Ovary (tissue), 10 donors: ENCODE measurements at regions of chr9 and their contacts with region 1.

Region 1: DNA sequence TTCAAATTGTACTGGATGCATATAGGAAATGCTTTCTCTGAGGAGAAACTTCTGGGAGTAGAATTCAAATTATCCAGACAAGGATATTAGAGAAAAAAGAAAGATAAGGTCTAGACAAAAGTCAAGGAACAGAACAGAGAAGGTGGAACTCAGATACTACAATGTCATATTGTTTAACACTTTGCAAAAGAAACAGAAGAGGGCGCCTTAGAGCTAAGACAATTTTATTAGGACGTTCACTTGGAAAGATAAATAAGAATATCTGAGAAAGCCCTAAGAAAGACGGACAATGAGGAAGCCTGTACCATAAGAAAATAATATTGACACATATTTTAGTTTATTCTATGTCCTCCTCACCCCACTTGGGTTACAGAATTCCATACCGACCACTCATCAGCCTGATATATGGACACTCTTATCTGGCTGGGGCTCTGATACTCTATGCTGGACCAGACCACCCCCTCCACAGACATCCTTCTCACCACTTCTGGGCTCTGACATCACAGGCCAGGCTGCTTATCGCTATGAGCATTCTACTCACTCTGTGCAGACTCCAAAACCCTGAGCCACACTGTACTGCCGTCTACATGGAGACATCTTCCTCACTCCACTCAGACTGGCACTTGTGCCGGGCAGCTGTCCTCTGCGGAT is 9.1 kb upstream of the AK3 start:
- DNase-seq: no peak
- H3K4me3 ChIP-seq: no peak overlapping the region
- H3K27ac ChIP-seq: no peak overlapping the region
- H3K4me1 ChIP-seq: peaks cover under 1% of the 10 kb centered on the region
- H3K27me3 ChIP-seq: no peaks in the 10 kb centered on the region
- CTCF ChIP-seq: peak in 2 of 3 donors; percentile 33 to 46
- EP300 ChIP-seq: no peak
- POLR2A ChIP-seq: no peak

Region 2: GRCh38 chr9:5425006-5425628 is 675.0 kb after region 1 on chr9:
- intact Hi-C with region 1: loop called in 2 of 4 experiments (anchors 10 kb)
- DNase-seq: no peak
- H3K4me3 ChIP-seq: no peak overlapping the region
- H3K27ac ChIP-seq: no peak overlapping the region
- H3K4me1 ChIP-seq: no peaks in the 10 kb centered on the region
- H3K27me3 ChIP-seq: no peaks in the 10 kb centered on the region
- CTCF ChIP-seq: no peak
- EP300 ChIP-seq: no peak
- POLR2A ChIP-seq: no peak

Region 3: DNA sequence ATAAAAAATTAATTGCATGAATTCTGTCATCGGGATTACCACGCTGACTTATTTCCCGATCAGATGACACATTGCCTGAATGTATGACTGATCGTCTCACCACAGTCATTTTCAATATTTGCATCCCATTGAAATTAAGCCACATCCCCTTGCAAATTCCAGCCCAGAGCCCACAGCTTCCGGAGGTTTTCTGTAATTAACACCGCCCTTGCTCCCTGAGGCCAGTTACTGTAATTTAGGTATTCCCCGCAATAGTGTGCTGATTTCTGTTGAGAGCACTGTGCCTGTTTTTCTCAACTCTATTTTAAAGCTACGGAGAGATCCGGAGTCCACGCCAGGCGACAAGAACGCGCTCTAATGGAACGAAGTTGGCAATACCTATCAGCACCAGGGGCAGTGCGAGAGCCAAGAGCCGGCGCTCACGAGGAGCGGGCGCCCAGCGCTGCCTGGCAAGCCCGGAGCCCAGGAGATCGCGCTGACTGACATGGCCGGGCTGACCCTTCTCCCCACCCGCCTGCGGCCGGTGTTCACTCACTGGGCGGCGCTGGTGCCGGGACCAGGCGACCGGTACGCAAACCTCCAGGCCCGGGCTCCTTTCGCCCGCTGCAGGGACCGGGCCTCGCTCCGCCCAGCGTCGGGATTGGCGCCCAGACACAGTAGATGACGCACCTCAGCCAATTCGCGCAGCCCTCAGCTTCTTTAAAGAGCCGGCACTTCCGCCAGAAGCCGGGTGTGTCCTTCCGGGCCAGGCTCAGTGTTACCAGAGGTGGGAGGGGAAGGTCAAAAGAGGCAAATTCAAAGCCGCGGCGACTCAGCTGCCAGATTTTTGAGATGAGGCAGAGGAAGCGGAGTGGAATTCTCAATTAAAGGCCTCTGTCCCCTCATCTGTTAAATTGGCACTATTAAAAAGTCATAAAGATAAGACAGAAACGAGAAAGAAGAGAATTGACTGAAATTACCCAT is 687.4 kb after region 1 on chr9 and contains the start of gene PLGRKT:
- intact Hi-C with region 1: loop called in 1 of 4 experiments (anchors 10 kb)
- DNase-seq: peak; percentile 91 to 95 (median 91)
- H3K4me3 ChIP-seq: peak within 1 kb of the TSS; percentile 81
- H3K27ac ChIP-seq: peak within 1 kb of the TSS; percentile 23 to 84
- H3K4me1 ChIP-seq: peaks cover 1% of the 10 kb centered on the region
- H3K27me3 ChIP-seq: no peaks in the 10 kb centered on the region
- CTCF ChIP-seq: peak in 2 of 3 donors; percentile 16 to 46
- EP300 ChIP-seq: no peak
- POLR2A ChIP-seq: peak; percentile 77
- total RNA-seq, gene PLGRKT: 2.9 to 24.6 (median 13.3) TPM

Region 4: DNA sequence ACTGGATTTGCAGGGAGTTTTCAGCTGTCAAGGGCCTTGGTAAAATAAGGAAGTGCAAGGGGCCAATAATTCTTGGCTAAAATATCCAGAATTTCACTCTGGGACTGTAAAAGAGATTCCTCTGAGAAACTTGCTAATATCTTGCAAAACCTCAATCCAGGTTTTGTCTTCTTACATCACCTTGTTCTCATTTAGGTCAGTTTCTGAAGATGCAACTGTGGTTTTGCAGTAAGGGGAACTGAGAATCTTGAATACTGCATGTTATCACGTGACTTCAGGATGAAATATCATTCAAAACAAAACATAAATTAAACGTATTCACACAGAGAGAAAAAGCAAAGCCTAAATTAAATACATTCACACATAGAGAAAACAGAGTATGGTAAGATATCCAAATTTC is 843.8 kb after region 1 on chr9:
- intact Hi-C with region 1: loop called in 2 of 4 experiments (anchors 10 kb)
- DNase-seq: no peak
- H3K4me3 ChIP-seq: no peak overlapping the region
- H3K27ac ChIP-seq: no peak overlapping the region
- H3K4me1 ChIP-seq: no peaks in the 10 kb centered on the region
- H3K27me3 ChIP-seq: no peaks in the 10 kb centered on the region
- CTCF ChIP-seq: no peak
- EP300 ChIP-seq: no peak
- POLR2A ChIP-seq: no peak